ENCODE measurements at regions of chr2 and their contacts with region 1.

Region 1: GRCh38 chr2:62195421-62196277 is at the start of gene B3GNT2:
- DNase-seq: peak; percentile 66 to 88 (median 80)
- ATAC-seq: peak; percentile 89
- H3K4me3 ChIP-seq: peak within 1 kb of the TSS; percentile 98
- H3K4me3 Mint-ChIP-seq: peak within 1 kb of the TSS; percentile 82 to 93 (median 89)
- H3K27ac ChIP-seq: peak within 1 kb of the TSS; percentile 86
- H3K27ac Mint-ChIP-seq: peak within 1 kb of the TSS in 7 of 9 donors; percentile 83 to 95 (median 91)
- H3K4me1 ChIP-seq: peaks cover 27 to 36% of the 10 kb centered on the region in 2 donors
- H3K4me1 Mint-ChIP-seq: peaks cover 28 to 44% (median 31%) of the 10 kb centered on the region in 7 donors
- H3K27me3 ChIP-seq: no peaks in the 10 kb centered on the region
- H3K27me3 Mint-ChIP-seq: peaks cover 0 to 6% (median 0%) of the 10 kb centered on the region in 5 donors
- total RNA-seq, gene B3GNT2: 16.9 to 37.0 (median 34.7) TPM

Region 2: DNA sequence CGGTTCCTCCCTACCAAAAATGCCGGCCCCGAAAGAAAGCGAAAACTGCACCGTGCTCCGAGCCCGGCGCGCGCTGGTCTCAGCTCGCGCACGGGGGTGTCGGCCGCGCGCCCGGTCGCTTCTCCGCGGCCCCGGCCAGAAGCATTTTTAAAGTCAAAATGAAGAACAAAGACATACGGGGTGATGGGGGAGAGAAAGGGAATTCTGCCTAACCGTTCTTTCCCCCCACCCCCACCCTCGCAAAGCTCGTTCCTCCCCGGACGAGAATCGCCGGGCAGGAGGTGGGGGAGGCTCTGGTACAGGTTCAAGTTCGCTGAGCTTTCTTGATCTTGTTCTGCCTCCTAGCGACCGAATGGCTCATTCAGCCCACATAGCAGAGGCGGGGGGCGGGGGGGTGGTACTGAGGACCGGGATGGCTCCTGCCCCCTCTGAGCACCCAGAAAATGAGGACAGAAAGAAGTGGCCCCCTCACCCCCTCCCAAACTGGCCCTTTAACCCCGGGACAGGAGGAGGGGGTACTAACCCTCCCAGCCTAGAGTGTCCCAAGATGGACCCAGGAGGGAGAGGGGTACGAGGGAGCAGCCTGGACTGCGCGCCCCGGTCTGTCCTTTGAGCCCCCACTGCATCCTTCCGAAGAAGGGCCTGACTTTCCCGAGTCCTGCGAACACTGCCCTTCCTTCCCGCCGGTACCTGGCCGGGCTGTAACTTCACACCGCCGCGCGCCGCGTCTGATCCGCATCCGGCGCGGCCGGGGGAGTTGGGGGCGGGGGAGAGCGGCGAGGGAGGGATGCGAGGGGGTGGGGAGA is 1645.3 kb before region 1 on chr2:
- CTCF ChIA-PET with region 1: no interaction called
- POLR2A ChIA-PET with region 1: no interaction called
- intact Hi-C with region 1: loop called in 1 of 2 experiments (anchors 5 kb)
- DNase-seq: peak in 8 of 9 donors; percentile 23 to 67 (median 50)
- ATAC-seq: peak; percentile 71
- H3K4me3 ChIP-seq: peak overlapping the region; percentile 70
- H3K4me3 Mint-ChIP-seq: peak overlapping the region; percentile 80 to 93 (median 90)
- H3K27ac ChIP-seq: peak overlapping the region; percentile 39
- H3K27ac Mint-ChIP-seq: peak overlapping the region in 6 of 9 donors; percentile 29 to 89 (median 68)
- H3K4me1 ChIP-seq: peaks cover 9 to 17% of the 10 kb centered on the region in 2 donors
- H3K4me1 Mint-ChIP-seq: peaks cover 11 to 57% (median 34%) of the 10 kb centered on the region in 7 donors
- H3K27me3 ChIP-seq: peaks cover 10 to 39% of the 10 kb centered on the region in 2 donors
- H3K27me3 Mint-ChIP-seq: peaks cover 46 to 87% (median 55%) of the 10 kb centered on the region in 5 donors

Region 3: DNA sequence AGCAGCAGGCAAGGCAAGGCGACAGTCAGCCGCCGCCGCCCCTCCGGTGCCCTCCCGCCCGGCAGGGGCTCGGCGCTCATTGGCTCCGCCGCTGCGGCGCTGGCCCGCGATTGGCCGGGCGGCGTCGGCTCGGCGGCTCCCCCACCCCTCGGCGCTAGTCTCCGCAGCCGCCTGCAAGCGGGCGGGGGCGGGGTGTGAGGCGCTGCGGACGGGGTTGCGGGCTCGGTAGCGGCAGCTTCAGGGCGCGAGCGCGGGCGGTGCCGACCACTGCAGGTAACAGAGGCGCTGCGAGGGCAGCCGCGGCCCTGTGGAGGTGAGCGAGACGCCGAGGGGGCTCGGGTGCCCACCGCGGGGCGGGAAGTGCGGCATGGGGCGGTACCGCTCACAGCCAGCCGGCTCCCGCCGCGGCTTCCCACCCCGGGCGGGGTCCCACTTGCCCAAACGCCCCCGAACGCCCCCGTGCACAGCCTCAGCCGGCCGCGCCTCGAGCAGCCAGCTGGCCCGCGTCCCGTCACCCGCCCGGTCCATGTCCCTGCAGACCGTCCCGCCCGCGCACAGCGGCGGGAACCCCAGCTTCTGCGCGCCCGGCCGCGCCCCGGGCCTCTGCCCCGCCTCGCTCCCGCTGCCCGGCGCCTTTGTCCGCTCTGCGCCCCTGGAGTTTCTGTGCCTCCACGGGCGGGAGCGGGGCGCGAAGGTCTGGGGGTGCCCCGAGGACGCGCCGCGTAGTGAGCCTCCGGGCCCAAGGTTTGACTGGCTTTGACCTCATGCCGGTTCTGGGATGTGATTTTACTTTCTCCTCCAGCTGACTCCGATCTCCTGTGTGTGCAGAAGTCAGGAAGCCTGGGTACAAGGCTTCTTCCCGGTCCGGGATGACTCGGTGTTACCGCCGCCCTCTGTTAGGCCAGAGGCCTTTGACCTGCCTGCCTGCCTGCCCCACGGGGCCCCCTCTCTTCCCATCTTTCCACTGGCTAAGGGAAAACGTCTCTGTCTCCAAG is 1129.6 kb before region 1 on chr2 and contains the start of gene SANBR:
- CTCF ChIA-PET with region 1: no interaction called
- POLR2A ChIA-PET with region 1: no interaction called
- intact Hi-C with region 1: loop called in 1 of 2 experiments (anchors 5 kb)
- DNase-seq: peak; percentile 78 to 90 (median 83)
- ATAC-seq: peak; percentile 99
- H3K4me3 ChIP-seq: peak within 1 kb of the TSS; percentile 59
- H3K4me3 Mint-ChIP-seq: peak within 1 kb of the TSS; percentile 79 to 98 (median 95)
- H3K27ac ChIP-seq: peak within 1 kb of the TSS; percentile 49
- H3K27ac Mint-ChIP-seq: peak within 1 kb of the TSS; percentile 12 to 94 (median 79)
- H3K4me1 ChIP-seq: peaks cover 0 to 6% of the 10 kb centered on the region in 2 donors
- H3K4me1 Mint-ChIP-seq: peaks cover 0 to 17% (median 5%) of the 10 kb centered on the region in 7 donors
- H3K27me3 ChIP-seq: no peaks in the 10 kb centered on the region
- H3K27me3 Mint-ChIP-seq: peaks cover 0 to 2% (median 0%) of the 10 kb centered on the region in 5 donors
- total RNA-seq, gene SANBR: 2.0 to 5.9 (median 3.6) TPM

Region 4: DNA sequence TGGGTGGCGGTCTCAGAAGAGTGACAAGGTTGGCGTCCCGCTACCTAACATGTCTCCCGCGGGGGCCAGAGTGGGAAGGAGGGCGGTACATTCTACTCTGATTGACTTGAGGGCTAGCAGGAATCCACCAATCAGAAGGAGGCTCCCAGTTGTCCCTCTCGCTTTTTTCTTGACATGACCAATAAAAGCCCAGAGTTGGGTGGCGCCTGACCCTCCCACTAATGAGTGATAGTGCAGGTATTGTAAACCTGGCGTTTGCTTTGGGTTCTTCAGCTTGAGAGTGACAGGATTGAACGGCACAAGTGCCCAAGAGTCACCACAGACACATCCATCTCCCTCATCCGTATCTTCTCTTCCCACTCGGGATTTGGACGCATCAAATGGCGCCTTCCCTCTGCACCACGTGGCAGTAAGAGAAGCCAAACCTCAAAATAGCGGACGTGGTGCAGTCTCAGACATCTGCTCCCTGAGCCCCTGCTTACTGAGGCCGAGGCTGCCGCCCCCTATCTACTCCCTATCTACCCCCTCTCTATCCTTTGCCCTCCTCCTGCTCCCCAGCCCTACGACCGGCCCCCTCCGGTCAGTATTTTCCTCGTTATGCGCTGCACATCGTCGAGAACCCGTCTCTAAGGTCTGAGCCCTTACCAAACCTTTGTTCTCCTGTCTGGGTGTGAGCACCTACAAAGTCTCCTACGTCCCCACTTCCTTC is 341.0 kb before region 1 on chr2:
- CTCF ChIA-PET with region 1: no interaction called
- POLR2A ChIA-PET with region 1: no interaction called
- intact Hi-C with region 1: loop called in 1 of 2 experiments (anchors 1 kb)
- DNase-seq: peak; percentile 61 to 96 (median 94)
- ATAC-seq: peak; percentile 95
- H3K4me3 ChIP-seq: peak overlapping the region; percentile 100
- H3K4me3 Mint-ChIP-seq: peak overlapping the region; percentile 92 to 99 (median 96)
- H3K27ac ChIP-seq: peak overlapping the region; percentile 77
- H3K27ac Mint-ChIP-seq: peak overlapping the region; percentile 90 to 98 (median 95)
- H3K4me1 ChIP-seq: peaks cover 4 to 6% of the 10 kb centered on the region in 2 donors
- H3K4me1 Mint-ChIP-seq: peaks cover 10 to 27% (median 17%) of the 10 kb centered on the region in 7 donors
- H3K27me3 ChIP-seq: no peaks in the 10 kb centered on the region
- H3K27me3 Mint-ChIP-seq: no peaks in the 10 kb centered on the region

Region 5: GRCh38 chr2:62234755-62235655 is 39.4 kb after region 1 on chr2:
- CTCF ChIA-PET with region 1: no interaction called
- POLR2A ChIA-PET with region 1: interaction called, 4 read pairs
- intact Hi-C with region 1: loop called (anchors 5 to 10 kb)
- DNase-seq: no peak
- ATAC-seq: no peak
- H3K4me3 ChIP-seq: no peak overlapping the region
- H3K4me3 Mint-ChIP-seq: no peak overlapping the region
- H3K27ac ChIP-seq: no peak overlapping the region
- H3K27ac Mint-ChIP-seq: peak overlapping the region in 2 of 9 donors; percentile 38 to 41
- H3K4me1 ChIP-seq: no peaks in the 10 kb centered on the region
- H3K4me1 Mint-ChIP-seq: peaks cover 2 to 7% (median 5%) of the 10 kb centered on the region in 7 donors
- H3K27me3 ChIP-seq: no peaks in the 10 kb centered on the region
- H3K27me3 Mint-ChIP-seq: no peaks in the 10 kb centered on the region

Region 6: GRCh38 chr2:62375113-62375420 is 179.4 kb after region 1 on chr2:
- CTCF ChIA-PET with region 1: no interaction called
- POLR2A ChIA-PET with region 1: no interaction called
- intact Hi-C with region 1: no loop called
- DNase-seq: no peak
- ATAC-seq: no peak
- H3K4me3 ChIP-seq: no peak overlapping the region
- H3K4me3 Mint-ChIP-seq: no peak overlapping the region
- H3K27ac ChIP-seq: no peak overlapping the region
- H3K27ac Mint-ChIP-seq: no peak overlapping the region
- H3K4me1 ChIP-seq: no peaks in the 10 kb centered on the region
- H3K4me1 Mint-ChIP-seq: no peaks in the 10 kb centered on the region
- H3K27me3 ChIP-seq: no peaks in the 10 kb centered on the region
- H3K27me3 Mint-ChIP-seq: peaks cover 0 to 2% (median 0%) of the 10 kb centered on the region in 5 donors

Region 7: GRCh38 chr2:62415019-62415431 is 219.4 kb after region 1 on chr2:
- CTCF ChIA-PET with region 1: no interaction called
- POLR2A ChIA-PET with region 1: no interaction called
- intact Hi-C with region 1: loop called (anchors 1 to 5 kb)
- DNase-seq: no peak
- ATAC-seq: peak; percentile 29
- H3K4me3 ChIP-seq: no peak overlapping the region
- H3K4me3 Mint-ChIP-seq: peak overlapping the region in 1 of 10 donors; percentile 15
- H3K27ac ChIP-seq: no peak overlapping the region
- H3K27ac Mint-ChIP-seq: peak overlapping the region in 2 of 9 donors; percentile 19 to 23
- H3K4me1 ChIP-seq: peaks cover 0 to 7% of the 10 kb centered on the region in 2 donors
- H3K4me1 Mint-ChIP-seq: peaks cover 0 to 14% (median 0%) of the 10 kb centered on the region in 7 donors
- H3K27me3 ChIP-seq: no peaks in the 10 kb centered on the region
- H3K27me3 Mint-ChIP-seq: peaks cover 0 to 10% (median 5%) of the 10 kb centered on the region in 5 donors